Posterior vena cava (tissue), 2 donors: ENCODE measurements at regions of chr9 and their contacts with region 1.

Region 1: DNA sequence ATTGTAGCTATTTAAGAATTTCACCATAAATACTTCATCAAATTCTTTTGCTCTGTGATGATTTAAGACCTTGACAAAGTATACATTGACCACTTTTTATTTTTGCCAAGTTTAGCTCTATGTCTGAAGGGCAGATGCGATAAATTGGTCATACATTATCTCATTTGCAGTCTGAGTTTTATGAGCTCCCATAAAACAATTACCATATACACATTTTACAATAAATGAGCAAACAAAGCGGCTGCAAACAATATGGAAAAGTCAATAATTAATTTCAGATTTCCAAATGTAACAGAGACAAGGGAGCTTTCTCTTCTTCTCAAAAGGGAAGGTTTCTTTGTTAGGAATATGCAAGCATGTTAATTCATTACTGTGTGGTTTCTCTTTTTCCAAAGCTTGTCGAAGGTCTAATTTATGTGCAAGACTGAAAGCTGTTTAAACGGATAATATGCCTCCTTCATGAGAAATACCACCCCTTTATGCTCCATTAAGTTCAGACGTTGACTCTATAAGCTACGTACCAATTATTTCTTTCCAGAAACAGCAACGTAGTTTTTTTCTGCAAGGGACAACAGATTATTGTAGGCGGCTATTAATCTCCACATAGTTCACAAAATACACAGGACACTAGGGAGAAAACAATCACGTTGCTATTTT is 7.0 kb upstream of the IZUMO3 start:
- DNase-seq: no peak

Region 2: DNA sequence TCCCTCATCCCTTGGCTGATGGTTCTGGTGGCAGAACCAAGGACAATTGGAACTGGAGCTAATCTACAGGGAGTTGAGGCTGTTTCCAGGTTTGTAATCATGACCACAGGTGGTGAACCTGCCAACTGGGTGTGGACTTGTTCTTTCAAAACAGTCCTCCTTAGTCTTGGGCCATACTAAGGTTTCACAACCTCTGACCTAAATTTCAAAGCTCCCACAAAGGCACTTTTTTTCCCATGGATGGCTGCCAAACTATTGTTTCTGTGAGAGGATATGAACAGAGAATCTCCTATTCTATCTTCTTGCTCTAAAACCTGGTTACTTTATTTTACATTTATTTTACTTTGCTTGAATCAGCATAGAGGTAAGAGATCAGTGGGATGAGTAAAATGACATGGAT is 99.5 kb after region 1 on chr9:
- intact Hi-C with region 1: no loop called
- DNase-seq: no peak

Region 3: GRCh38 chr9:25472140-25472539 is 919.5 kb after region 1 on chr9:
- intact Hi-C with region 1: loop called in 1 of 2 experiments (anchors 5 kb)
- DNase-seq: peak; percentile 60